ENCODE measurements at regions of chr3 and their contacts with region 1.

Region 1: DNA sequence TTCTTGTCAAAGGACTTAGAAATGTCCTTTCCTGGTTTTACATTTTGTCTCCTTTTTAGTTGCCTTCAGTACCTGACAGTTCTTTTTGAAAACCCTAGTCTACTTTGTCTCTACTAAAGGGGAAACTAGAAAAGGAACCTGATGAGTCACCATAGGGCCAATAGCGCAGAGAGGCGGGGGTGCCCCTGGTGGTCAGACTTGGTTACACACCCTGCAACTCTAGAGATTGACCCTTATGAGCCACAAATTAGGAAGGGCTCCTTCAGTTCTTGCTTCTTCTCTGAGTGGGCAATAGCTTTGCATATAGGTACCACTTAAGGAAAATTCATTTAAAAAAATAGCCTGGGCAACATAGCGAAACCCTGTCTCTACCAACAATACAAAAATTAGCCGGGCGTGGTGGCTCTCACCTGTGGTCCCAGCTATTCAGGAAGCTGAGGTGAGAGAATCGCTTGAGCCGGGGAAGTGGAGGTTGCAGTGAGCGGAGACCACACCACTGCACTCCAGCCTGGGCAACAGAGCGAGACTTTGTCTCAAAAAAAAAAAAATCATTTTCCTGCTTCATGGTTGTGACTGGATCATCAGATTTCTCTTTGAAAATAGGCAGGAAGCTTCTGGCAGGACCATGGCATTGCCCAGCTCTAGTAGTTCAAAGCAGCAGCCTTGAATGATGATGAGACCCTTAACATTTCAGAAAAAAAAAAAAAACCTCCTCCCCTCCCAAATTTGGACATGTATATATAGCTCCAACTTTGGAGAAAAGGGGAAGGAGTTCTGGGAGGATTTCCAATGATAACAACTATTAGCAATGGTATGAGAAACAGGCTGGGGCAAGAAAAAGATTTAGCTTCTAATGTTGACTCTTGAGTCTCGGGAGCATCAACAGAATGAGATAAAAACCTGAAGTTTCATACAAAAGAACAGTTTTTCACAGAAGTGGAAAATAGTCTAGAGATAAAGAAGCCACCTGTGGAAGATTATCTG is 45.2 kb upstream of the RASA2 start:
- H3K4me3 ChIP-seq: no peak overlapping the region
- H3K27ac ChIP-seq: no peak overlapping the region
- H3K4me1 ChIP-seq: no peaks in the 10 kb centered on the region
- CTCF ChIP-seq: no peak

Region 2: GRCh38 chr3:141321109-141321497 is 120.6 kb before region 1 on chr3:
- CTCF ChIA-PET with region 1: no interaction called
- POLR2A ChIA-PET with region 1: no interaction called
- H3K4me3 ChIP-seq: no peak overlapping the region
- H3K27ac ChIP-seq: no peak overlapping the region
- H3K4me1 ChIP-seq: no peaks in the 10 kb centered on the region
- CTCF ChIP-seq: no peak

Region 3: DNA sequence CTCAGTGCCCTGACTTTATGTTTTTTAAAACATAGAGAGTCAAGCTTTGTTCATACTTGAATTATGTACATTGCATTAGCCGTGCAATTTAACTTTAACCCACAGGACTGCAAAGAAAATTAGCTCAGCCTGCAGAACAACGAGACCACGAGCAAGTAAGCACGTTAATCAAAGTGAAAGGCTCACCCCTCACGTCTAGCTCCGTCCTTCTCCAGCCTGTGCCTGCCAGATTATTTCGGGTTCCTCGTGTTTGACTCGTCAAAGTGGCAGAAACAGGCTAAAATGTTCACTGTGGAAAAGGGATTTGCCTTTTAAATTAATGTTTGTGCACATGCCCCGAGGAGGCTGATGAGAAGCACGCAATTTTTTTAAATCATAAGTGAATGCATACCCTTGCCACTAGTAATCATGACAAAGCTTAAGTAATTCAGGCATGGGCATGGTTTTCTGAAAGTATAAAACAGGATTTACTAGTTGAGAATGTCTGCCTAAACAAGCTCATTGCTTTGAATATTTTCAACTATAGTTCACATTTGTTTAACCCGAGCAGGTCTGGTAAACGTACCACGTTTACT is 58.0 kb before region 1 on chr3:
- CTCF ChIA-PET with region 1: interaction called, 17 read pairs
- POLR2A ChIA-PET with region 1: no interaction called
- H3K4me3 ChIP-seq: no peak overlapping the region
- H3K27ac ChIP-seq: peak overlapping the region; percentile 29; the same call in 1 of the 2 replicates
- H3K4me1 ChIP-seq: peaks cover 4% of the 10 kb centered on the region; the same call in 1 of the 2 replicates
- CTCF ChIP-seq: no peak

Measured in HEK293 (cell line).